Dorsolateral prefrontal cortex (tissue), 120 donors: ENCODE measurements at regions of chr6 and their contacts with region 1.

Region 1: GRCh38 chr6:133923938-133924593 is 29.0 kb upstream of the TBPL1 start:
- DNase-seq: peak in 7 of 10 donors; percentile 49 to 82 (median 64)
- H3K4me3 ChIP-seq: no peak overlapping the region
- H3K27ac ChIP-seq: no peak overlapping the region
- H3K27me3 ChIP-seq: no peaks in the 10 kb centered on the region
- CTCF ChIP-seq: peak; percentile 57 to 99 (median 92)

Region 2: DNA sequence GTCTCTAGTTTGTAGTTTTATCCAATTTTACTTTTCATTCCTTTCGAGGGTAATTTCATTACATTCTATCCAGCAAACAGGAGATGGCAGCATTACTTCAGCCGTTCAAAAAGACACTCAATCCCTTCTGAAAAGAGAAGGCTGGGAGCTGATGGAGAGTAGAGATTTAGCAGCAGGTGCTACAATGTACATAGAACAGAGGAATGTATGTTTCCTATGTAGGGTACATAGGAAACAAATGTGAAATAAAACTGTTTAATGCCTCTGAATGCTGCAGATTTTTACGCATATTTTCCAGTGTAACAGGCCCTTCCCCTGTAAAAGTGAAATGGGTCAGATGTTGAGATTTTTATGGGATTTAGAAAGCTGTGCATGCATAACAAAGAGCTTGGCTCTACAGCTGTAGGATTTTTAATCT is 1093.7 kb before region 1 on chr6:
- intact Hi-C with region 1: loop called in 1 of 2 experiments (anchors 10 kb)
- DNase-seq: no peak
- H3K4me3 ChIP-seq: no peak overlapping the region
- H3K27ac ChIP-seq: peak overlapping the region in 3 of 59 donors; percentile 12 to 18 (median 14)
- H3K27me3 ChIP-seq: no peaks in the 10 kb centered on the region
- CTCF ChIP-seq: peak; percentile 38 to 85 (median 68)

Region 3: GRCh38 chr6:133568970-133569889 is 354.8 kb before region 1 on chr6:
- intact Hi-C with region 1: loop called (anchors 2 to 5 kb)
- DNase-seq: peak in 3 of 10 donors; percentile 31 to 54 (median 38)
- H3K4me3 ChIP-seq: peak overlapping the region; percentile 25 to 72 (median 51)
- H3K27ac ChIP-seq: no peak overlapping the region
- H3K27me3 ChIP-seq: peaks cover 0 to 10% (median 0%) of the 10 kb centered on the region in 45 donors
- CTCF ChIP-seq: peak; percentile 70 to 96 (median 88)

Region 4: GRCh38 chr6:133697666-133698065 is 226.4 kb before region 1 on chr6:
- intact Hi-C with region 1: no loop called
- DNase-seq: peak in 2 of 10 donors; percentile 14 to 70
- H3K4me3 ChIP-seq: no peak overlapping the region
- H3K27ac ChIP-seq: peak overlapping the region in 1 of 59 donors; percentile 78
- H3K27me3 ChIP-seq: no peaks in the 10 kb centered on the region
- CTCF ChIP-seq: no peak

Region 5: GRCh38 chr6:133741375-133741861 is 182.6 kb before region 1 on chr6:
- intact Hi-C with region 1: no loop called
- DNase-seq: peak in 1 of 10 donors; percentile 42
- H3K4me3 ChIP-seq: no peak overlapping the region
- H3K27ac ChIP-seq: peak overlapping the region in 1 of 59 donors; percentile 16
- H3K27me3 ChIP-seq: peaks cover 0 to 6% (median 0%) of the 10 kb centered on the region in 45 donors
- CTCF ChIP-seq: no peak

Region 6: DNA sequence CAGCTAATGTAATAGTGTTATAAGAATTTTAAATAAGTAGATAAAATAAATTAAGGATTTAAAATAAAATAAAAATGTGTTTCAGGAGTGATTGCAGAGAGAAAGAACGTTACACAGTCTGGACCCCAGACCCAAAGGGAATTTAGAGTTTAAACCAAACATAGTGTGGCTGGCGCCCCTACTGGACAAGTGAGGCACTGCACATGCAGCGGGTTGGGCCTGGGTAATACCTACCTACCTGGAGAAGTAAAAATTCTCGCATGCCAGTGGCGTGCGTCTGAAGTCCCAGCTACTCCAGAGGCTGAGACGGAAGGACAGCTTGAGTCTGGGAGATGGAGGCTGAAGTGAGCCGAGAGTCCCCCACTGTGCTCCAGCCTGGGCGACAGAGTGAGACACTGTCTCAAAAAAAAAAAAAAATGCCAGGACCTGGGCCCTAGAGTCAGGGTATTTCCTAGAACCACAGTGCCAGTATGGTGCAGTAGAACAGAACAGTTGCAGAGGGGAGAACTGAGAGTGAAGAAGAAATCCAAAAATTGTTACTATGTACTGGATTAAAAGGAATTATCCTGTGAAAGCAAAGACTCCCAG is 106.5 kb before region 1 on chr6:
- intact Hi-C with region 1: no loop called
- DNase-seq: no peak
- H3K4me3 ChIP-seq: no peak overlapping the region
- H3K27ac ChIP-seq: no peak overlapping the region
- H3K27me3 ChIP-seq: peaks cover 0 to 22% (median 0%) of the 10 kb centered on the region in 45 donors
- CTCF ChIP-seq: peak in 37 of 56 donors; percentile 9 to 45 (median 28)

Region 7: GRCh38 chr6:133837801-133838349 is 86.2 kb before region 1 on chr6:
- intact Hi-C with region 1: loop called (anchors 5 kb)
- DNase-seq: no peak
- H3K4me3 ChIP-seq: peak overlapping the region in 49 of 59 donors; percentile 3 to 62 (median 39)
- H3K27ac ChIP-seq: no peak overlapping the region
- H3K27me3 ChIP-seq: peaks cover 0 to 38% (median 13%) of the 10 kb centered on the region in 45 donors
- CTCF ChIP-seq: peak in 55 of 56 donors; percentile 21 to 75 (median 55)

Region 8: DNA sequence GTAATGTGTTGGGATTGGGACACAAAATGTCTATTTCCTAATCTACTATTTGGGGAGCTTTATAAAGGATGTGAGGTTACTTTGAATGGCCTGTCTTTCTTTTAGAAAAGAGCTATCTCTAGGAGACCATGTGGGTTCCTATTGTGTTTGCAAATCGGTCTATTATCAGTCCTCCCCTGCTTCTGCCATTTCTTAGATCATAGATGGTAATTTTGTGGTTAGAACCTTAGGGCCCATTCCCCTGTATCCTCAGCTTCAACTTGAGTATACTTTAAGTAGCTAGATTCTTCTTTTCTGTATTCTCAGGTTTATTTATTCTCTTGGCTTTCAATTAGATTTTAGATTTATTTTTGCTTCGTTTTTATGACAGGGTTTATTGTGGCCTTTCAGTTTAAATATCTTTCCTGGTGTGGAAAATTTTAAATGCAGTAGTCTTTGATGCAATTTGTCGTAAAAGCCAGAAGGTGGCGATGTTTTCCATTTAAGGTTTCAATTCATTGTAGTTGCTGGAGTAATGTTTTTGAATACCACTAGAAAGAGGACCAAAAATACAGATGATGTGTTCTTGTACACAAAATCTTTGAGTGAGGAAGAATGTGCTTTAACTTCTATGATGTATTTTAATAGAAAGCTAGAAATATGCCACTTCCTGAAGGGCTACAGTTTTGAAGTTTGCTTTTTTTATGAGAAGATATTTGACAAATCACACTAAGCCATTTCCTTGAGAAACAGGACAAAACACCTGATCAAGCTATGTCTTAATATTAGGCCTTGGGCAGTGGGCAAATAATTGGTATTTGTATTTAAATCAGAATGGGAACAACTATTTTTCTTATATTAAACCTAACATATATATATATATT is 49.3 kb after region 1 on chr6:
- intact Hi-C with region 1: loop called in 1 of 2 experiments (anchors 5 kb)
- DNase-seq: no peak
- H3K4me3 ChIP-seq: no peak overlapping the region
- H3K27ac ChIP-seq: peak overlapping the region in 51 of 59 donors; percentile 3 to 81 (median 60)
- H3K27me3 ChIP-seq: no peaks in the 10 kb centered on the region
- CTCF ChIP-seq: peak; percentile 73 to 97 (median 87)

Region 9: GRCh38 chr6:134063966-134064445 is 139.9 kb after region 1 on chr6:
- intact Hi-C with region 1: loop called in 1 of 2 experiments (anchors 10 kb)
- DNase-seq: peak in 9 of 10 donors; percentile 57 to 85 (median 69)
- H3K4me3 ChIP-seq: peak overlapping the region in 5 of 59 donors; percentile 7 to 32 (median 26)
- H3K27ac ChIP-seq: peak overlapping the region in 41 of 59 donors; percentile 7 to 86 (median 69)
- H3K27me3 ChIP-seq: no peaks in the 10 kb centered on the region
- CTCF ChIP-seq: peak; percentile 38 to 94 (median 86)

Region 10: DNA sequence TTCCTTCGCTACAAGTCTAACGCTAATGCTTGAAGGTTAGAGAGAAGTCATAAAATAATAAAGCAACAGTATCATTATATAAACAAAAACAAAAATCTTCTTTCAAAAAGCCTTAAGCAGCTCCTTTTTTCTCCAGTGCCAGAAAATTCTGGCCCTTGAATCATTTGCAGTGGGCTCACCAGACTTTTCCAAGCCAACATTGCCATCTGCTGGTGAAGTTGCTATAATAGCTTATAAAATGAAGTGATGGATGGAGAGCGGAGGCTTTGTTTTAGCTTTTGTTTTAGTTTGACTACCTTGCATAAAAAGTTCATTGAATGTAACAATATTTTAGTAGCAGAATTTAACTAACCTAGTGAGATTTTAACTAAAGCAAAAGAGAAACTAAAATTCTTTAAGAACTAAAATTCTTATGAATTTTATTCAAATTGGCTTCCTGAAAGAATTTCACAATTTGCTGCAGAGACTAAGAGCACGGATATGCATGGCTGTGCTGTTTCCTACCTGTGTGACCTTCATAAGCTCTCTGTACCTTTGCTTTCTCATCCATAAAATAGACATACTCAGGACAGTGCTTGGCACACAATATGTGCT is 173.1 kb after region 1 on chr6:
- intact Hi-C with region 1: loop called (anchors 1 to 2 kb)
- DNase-seq: peak in 8 of 10 donors; percentile 47 to 74 (median 64)
- H3K4me3 ChIP-seq: peak overlapping the region in 2 of 59 donors; percentile 0 to 17
- H3K27ac ChIP-seq: peak overlapping the region in 5 of 59 donors; percentile 3 to 28 (median 16)
- H3K27me3 ChIP-seq: no peaks in the 10 kb centered on the region
- CTCF ChIP-seq: peak; percentile 70 to 99 (median 88)